ENCODE measurements at regions of chr15 and their contacts with region 1.

Region 1: DNA sequence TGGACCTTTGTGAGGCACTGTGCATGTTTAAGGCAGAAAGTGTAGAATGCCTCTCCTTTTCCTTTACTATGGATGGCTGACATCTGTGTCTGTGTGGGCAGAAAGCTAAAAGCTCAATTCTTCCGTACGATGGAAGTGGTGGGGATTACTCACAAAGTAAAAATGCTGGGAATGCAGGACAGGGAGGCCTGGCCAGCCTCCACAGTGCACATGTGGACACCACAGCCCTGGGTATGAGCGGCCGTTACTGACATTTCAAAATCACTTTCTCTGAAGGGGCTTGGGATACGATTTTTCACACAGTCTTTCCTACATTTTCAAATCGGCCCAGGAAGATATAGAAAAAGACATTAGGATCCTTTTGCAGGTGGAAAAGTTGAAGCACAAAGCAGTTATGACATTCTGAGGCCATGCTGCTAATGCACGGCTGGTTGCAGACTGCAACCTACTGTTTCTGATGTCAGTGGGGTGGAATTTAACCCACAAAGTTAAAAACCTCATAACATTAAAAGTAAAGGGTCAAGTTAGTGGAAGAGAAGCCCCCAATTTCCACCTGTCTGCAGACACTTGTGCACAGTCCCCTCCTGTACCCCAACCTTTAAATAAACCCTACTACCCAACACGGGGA is 27.9 kb downstream of the EHD4 start:
- DNase-seq: no peak
- ATAC-seq: no peak
- H3K4me3 ChIP-seq: no peak overlapping the region
- H3K4me3 Mint-ChIP-seq: no peak overlapping the region
- H3K27ac ChIP-seq: no peak overlapping the region
- H3K27ac Mint-ChIP-seq: peak overlapping the region in 1 of 2 donors; percentile 59
- H3K4me1 ChIP-seq: peaks cover 0 to 14% of the 10 kb centered on the region in 2 experiments
- H3K4me1 Mint-ChIP-seq: peaks cover 5 to 20% (median 19%) of the 10 kb centered on the region in 3 donors
- H3K27me3 ChIP-seq: no peaks in the 10 kb centered on the region
- H3K27me3 Mint-ChIP-seq: no peaks in the 10 kb centered on the region

Region 2: DNA sequence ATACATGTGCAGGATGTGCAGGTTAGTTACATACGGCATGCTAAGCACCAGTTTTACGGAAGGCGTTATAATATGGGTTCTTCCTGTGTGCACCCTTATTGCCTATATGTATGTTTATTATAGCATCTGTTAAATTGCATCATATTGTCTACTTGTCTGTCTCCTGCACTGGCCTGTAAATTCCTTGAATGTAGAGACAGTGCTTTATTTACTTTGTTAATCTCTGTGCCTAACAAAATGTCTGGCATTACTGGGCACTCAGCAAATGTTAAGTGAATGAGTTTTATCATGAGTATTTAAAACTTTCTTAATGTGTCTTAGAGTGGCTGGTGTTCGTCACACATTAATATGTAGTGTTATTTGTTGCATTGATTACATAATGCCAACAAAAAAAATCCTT is 260.5 kb before region 1 on chr15:
- CTCF ChIA-PET with region 1: no interaction called
- POLR2A ChIA-PET with region 1: interaction called in 1 of 2 experiments, 14 read pairs
- DNase-seq: no peak
- ATAC-seq: no peak
- H3K4me3 ChIP-seq: no peak overlapping the region
- H3K4me3 Mint-ChIP-seq: no peak overlapping the region
- H3K27ac ChIP-seq: no peak overlapping the region
- H3K27ac Mint-ChIP-seq: no peak overlapping the region
- H3K4me1 ChIP-seq: peaks cover 3 to 6% of the 10 kb centered on the region in 2 experiments
- H3K4me1 Mint-ChIP-seq: peaks cover 80 to 88% (median 82%) of the 10 kb centered on the region in 3 donors
- H3K27me3 ChIP-seq: no peaks in the 10 kb centered on the region
- H3K27me3 Mint-ChIP-seq: no peaks in the 10 kb centered on the region

Region 3: GRCh38 chr15:41789236-41789635 is 155.2 kb before region 1 on chr15:
- CTCF ChIA-PET with region 1: no interaction called
- POLR2A ChIA-PET with region 1: no interaction called
- DNase-seq: no peak
- ATAC-seq: no peak
- H3K4me3 ChIP-seq: no peak overlapping the region
- H3K4me3 Mint-ChIP-seq: no peak overlapping the region
- H3K27ac ChIP-seq: no peak overlapping the region
- H3K27ac Mint-ChIP-seq: peak overlapping the region in 1 of 2 donors; percentile 9
- H3K4me1 ChIP-seq: peaks cover 20 to 21% of the 10 kb centered on the region in 2 experiments
- H3K4me1 Mint-ChIP-seq: peaks cover 35 to 46% (median 41%) of the 10 kb centered on the region in 3 donors
- H3K27me3 ChIP-seq: no peaks in the 10 kb centered on the region
- H3K27me3 Mint-ChIP-seq: no peaks in the 10 kb centered on the region

Region 4: DNA sequence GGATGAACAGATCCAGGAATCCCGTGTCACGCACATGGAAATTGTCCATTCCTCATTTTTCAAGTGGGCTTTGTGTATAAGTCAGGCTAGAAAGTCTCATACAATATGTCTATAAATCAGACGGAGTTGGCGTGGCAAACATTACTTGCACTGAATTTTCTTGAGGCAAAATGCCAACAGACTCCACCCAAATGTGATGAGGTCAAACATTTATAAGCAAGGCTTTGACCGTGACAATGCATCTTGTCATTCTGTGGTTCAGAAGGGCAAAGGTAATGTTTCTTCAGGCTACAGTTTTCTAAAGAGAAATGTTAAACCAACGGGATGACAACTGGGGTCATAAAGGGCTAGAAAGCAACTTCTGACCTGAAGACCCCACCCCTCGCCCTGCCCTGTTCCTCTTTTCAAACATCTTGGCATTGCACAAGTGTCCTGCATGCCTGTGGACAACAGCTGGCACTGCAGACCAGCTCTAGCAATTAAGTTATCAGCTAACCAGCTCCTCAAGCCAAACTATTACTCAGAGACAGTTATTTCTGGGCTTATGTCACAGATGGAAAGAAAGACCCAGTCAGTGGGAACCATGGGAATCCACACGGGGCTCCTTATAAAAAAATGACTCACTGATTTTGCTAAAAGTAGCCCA is 14.1 kb before region 1 on chr15:
- CTCF ChIA-PET with region 1: no interaction called
- POLR2A ChIA-PET with region 1: no interaction called
- DNase-seq: peak in 1 of 35 experiments; percentile 29
- ATAC-seq: no peak
- H3K4me3 ChIP-seq: no peak overlapping the region
- H3K4me3 Mint-ChIP-seq: no peak overlapping the region
- H3K27ac ChIP-seq: no peak overlapping the region
- H3K27ac Mint-ChIP-seq: peak overlapping the region in 1 of 2 donors; percentile 39
- H3K4me1 ChIP-seq: peaks cover 25 to 44% of the 10 kb centered on the region in 2 experiments
- H3K4me1 Mint-ChIP-seq: peaks cover 37 to 60% (median 45%) of the 10 kb centered on the region in 3 donors
- H3K27me3 ChIP-seq: no peaks in the 10 kb centered on the region
- H3K27me3 Mint-ChIP-seq: no peaks in the 10 kb centered on the region

Region 5: DNA sequence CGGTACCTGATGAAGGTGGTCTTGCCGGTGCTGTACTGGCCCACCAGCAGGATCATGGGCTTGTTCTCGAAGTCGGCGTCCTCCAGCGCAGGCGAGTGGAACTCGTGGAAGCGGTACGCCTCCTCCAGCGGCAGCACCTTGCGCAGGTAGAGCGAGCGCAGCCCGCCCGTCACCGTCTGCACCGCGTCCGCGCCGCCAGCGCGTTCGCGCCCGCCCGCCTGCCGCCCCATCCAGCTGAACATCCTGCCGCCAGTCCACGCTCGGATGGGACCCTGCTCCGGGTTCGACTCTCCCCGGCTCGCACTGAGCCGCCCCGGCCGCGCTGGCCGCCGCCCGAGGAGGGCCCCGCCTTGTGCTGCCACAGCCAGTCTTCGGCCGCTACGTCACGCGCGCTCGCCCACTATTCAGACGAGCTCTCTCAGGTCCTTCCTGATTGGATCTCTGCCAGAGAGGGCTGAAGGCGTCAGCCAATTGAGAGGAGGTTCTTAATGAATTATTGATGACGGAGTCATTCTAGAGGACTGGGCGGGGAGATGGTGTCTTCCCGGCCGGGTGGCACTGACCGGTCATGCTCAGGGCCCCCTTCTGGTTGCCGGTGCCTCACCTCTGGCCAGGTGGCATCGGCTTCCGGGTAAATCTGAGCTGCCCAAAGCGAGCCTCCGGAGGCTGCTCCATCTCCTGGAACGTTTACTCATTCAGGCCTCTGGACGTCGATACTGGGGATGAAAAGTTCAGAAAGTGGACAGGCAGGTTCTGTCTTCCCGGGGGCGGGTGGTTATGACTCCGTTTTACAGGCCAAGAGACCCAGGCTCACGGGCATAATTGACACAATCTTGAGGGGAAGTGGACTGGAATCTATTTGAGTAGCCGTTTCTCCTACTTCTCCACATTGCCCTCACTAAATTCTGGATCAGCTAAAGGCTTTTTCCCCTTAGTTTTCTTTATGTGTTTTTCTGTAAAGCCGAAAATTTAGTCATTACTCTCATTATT is 28.1 kb after region 1 on chr15 and contains the start of gene EHD4:
- CTCF ChIA-PET with region 1: interaction called in 1 of 2 experiments, 3 read pairs
- POLR2A ChIA-PET with region 1: interaction called in 1 of 2 experiments, 12 read pairs
- DNase-seq: peak; percentile 83 to 98 (median 93)
- ATAC-seq: peak; percentile 85 to 92 (median 90)
- H3K4me3 ChIP-seq: peak within 1 kb of the TSS; percentile 77
- H3K4me3 Mint-ChIP-seq: peak within 1 kb of the TSS; percentile 87 to 92 (median 92)
- H3K27ac ChIP-seq: peak within 1 kb of the TSS; percentile 66
- H3K27ac Mint-ChIP-seq: peak within 1 kb of the TSS; percentile 88 to 89
- H3K4me1 ChIP-seq: peaks cover 25 to 28% of the 10 kb centered on the region in 2 experiments
- H3K4me1 Mint-ChIP-seq: peaks cover 42 to 48% (median 44%) of the 10 kb centered on the region in 3 donors
- H3K27me3 ChIP-seq: peaks cover 0 to 5% of the 10 kb centered on the region in 2 experiments
- H3K27me3 Mint-ChIP-seq: peaks cover 8 to 12% of the 10 kb centered on the region in 2 donors
- total RNA-seq, gene EHD4: 11.7 to 46.8 (median 16.8) TPM